A673 (cell line): ENCODE measurements at regions of chr1 and their contacts with region 1.

Region 1: GRCh38 chr1:47738560-47739182 is 258.5 kb downstream of the TRABD2B start:
- DNase-seq: peak; percentile 61
- H3K4me3 ChIP-seq: no peak overlapping the region
- H3K27ac ChIP-seq: no peak overlapping the region
- H3K4me1 ChIP-seq: no peaks in the 10 kb centered on the region
- H3K27me3 ChIP-seq: peaks cover 39% of the 10 kb centered on the region
- CTCF ChIP-seq: peak; percentile 82

Region 2: DNA sequence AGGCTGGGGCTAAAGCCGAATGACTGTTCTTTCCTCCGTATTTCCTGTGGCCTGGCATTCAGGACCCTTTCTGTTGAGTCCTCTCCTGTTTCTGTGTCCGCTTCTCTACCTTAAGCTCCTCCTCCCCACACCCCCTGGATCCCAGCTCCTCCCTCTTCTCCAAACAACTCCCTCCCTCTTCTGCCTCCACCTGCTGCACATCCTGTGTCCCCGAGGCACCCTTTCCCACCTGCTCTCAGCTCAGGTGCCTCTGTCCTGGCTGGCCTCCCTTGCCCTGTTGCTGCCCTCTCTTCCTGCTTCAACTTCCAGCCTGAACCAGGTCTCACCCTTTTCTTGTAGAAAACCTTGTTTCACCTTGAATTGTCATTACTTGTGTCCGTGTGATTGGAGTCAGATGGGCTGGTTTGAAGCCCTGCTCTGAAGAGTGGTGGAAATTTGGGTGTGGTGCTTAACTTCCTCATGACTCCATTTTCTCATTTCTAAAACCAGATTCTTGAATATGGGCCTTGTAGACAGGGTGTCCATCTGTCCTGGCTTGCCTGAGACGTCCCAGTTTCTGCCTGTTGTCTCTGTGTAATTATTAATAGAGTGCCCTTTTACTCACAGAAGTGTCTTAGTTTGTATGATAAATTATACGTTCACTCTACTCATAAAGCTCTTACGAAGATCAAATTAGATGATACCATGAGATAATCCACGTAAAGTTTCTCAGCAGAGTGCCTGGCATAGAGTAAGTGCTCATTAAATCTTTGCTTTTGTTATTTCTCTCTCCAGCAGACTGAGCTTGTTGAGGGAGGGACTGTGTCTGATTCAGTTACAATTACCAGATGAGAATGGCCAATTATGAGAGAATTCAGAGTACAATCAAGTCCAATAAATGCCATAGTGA is 317.4 kb after region 1 on chr1:
- CTCF ChIA-PET with region 1: no interaction called
- POLR2A ChIA-PET with region 1: no interaction called
- intact Hi-C with region 1: loop called (anchors 10 kb)
- DNase-seq: no peak
- H3K4me3 ChIP-seq: no peak overlapping the region
- H3K27ac ChIP-seq: no peak overlapping the region
- H3K4me1 ChIP-seq: peaks cover 30% of the 10 kb centered on the region
- H3K27me3 ChIP-seq: peaks cover 49% of the 10 kb centered on the region
- CTCF ChIP-seq: no peak